H1 (cell line): ENCODE measurements at regions of chr17 and their contacts with region 1.

Region 1: DNA sequence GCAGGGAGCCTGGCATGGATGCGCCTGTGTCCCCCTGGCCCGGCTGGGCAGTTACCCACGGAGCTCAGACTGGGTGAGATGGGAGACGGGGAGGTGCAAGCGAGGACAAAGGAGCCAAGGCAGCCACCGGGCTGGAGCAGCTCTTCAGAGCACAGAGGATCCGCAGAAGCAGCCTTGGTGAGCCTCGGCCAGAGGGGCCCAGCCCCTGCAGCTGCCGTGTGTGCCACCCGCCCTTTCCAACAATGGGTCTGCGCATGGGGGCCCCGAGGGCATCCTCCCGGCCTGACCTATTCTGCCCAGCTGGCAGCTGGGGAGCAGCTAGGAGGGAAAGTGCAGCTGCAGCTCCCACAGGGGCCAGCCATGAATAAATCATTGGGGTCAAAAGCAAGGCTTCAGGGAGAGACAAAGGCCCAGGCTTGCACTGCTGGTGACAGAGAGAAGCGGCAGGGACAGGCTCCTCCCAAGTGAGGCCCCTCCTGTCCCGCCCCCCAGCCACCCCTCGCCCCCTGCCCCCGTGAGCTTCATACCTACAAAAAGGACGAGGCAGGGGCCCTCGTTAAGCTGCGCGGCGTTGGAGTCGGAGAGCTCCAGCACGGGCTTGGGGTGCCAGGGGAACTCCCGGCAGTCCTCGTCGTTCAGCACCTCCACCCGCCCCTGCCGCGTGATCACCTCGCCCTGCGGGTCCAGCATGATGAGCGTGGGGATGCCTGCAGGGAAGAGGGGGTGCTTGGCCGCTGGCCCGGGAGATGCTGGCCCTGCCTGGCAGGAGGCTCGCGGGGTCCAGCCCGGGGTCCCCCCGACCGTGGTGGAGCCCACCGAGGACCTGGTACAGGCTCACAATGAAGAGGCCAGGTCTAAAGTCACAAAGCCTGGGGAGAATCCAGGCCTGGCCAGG is 22.6 kb downstream of the MRM3 start:
- DNase-seq: no peak
- H3K4me3 ChIP-seq: no peak overlapping the region
- H3K27ac ChIP-seq: peak overlapping the region; percentile 65; the same call in 1 of the 2 replicates
- H3K4me1 ChIP-seq: peaks cover 0 to 5% (median 4%) of the 10 kb centered on the region in 4 experiments; a peak in 3 of 7 replicates
- H3K27me3 ChIP-seq: no peaks in the 10 kb centered on the region
- CTCF ChIP-seq: no peak
- EP300 ChIP-seq: no peak
- POLR2A ChIP-seq: no peak
- RAD21 ChIP-seq: no peak

Region 2: DNA sequence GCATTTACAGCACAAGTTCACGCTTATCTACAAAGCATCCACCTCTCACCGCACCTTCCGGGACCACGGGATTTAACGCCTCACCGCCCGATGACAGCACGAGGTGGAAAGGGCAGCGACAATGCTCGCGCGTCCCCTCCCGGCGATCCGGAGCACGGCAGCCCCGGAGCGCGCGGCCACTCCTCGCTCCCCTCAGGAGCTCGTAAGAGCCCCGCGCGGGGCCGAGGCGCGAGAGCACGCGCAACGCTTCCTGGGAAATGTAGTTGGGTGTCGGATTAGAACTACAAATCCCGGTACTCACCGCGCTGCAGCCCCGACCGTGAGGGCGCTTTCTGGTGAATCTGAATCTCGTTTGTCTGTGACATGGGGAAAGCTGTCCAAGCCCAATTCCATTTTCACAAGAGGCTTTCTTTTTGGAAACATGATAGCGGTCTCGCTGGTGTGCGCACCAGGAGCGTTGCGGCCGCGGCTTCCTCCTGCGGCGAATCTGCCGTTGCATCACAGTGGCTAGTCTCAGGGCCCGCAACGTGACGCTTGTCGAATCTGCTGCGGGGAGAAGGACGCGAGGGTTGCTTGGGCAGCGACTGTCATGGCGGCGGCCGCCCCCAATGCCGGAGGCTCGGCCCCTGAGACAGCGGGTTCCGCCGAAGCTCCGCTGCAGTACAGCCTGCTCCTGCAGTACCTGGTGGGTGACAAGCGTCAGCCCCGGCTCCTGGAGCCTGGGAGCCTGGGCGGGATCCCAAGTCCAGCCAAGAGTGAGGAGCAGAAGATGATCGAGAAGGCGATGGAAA is 192.0 kb after region 1 on chr17 and contains the start of gene TIMM22:
- CTCF ChIA-PET with region 1: interaction called, 26 read pairs
- POLR2A ChIA-PET with region 1: no interaction called
- DNase-seq: peak; percentile 94 to 97
- H3K4me3 ChIP-seq: peak within 1 kb of the TSS; percentile 86 to 99 (median 94)
- H3K27ac ChIP-seq: peak within 1 kb of the TSS; percentile 92
- H3K4me1 ChIP-seq: peaks cover 0 to 5% (median 0%) of the 10 kb centered on the region in 4 experiments; a peak in 2 of 7 replicates
- H3K27me3 ChIP-seq: no peaks in the 10 kb centered on the region; a peak in 1 of 7 replicates
- CTCF ChIP-seq: peak; percentile 82 to 93 (median 88)
- EP300 ChIP-seq: peak; percentile 38 to 99; a peak in 2 of 3 replicates
- POLR2A ChIP-seq: peak; percentile 79 to 93
- RAD21 ChIP-seq: peak; percentile 91 to 93
- total RNA-seq, gene TIMM22: 17.2 and 17.4 TPM in 2 replicates